Activated CD4-positive, alpha-beta T cell treated with anti-CD3 and anti-CD28 coated beads for 36 hours (primary cell): ENCODE measurements at regions of chr12 and their contacts with region 1.

Region 1: GRCh38 chr12:49740930-49741881 is at the start of gene TMBIM6:
- DNase-seq: peak; percentile 99
- ATAC-seq: peak; percentile 93
- H3K4me3 Mint-ChIP-seq: peak within 1 kb of the TSS; percentile 89
- H3K27ac Mint-ChIP-seq: peak within 1 kb of the TSS; percentile 100
- H3K4me1 Mint-ChIP-seq: peaks cover 45% of the 10 kb centered on the region
- H3K27me3 Mint-ChIP-seq: no peaks in the 10 kb centered on the region
- total RNA-seq, gene TMBIM6: 378 to 450 TPM

Region 2: GRCh38 chr12:49366652-49367380 is 374.4 kb before region 1 on chr12:
- CTCF ChIA-PET with region 1: no interaction called
- POLR2A ChIA-PET with region 1: interaction called, 10 read pairs
- intact Hi-C with region 1: loop called in 1 of 2 experiments (anchors 1 kb)
- DNase-seq: peak; percentile 94
- ATAC-seq: peak; percentile 86
- H3K4me3 Mint-ChIP-seq: peak overlapping the region; percentile 97
- H3K27ac Mint-ChIP-seq: peak overlapping the region; percentile 99
- H3K4me1 Mint-ChIP-seq: peaks cover 25% of the 10 kb centered on the region
- H3K27me3 Mint-ChIP-seq: no peaks in the 10 kb centered on the region

Region 3: DNA sequence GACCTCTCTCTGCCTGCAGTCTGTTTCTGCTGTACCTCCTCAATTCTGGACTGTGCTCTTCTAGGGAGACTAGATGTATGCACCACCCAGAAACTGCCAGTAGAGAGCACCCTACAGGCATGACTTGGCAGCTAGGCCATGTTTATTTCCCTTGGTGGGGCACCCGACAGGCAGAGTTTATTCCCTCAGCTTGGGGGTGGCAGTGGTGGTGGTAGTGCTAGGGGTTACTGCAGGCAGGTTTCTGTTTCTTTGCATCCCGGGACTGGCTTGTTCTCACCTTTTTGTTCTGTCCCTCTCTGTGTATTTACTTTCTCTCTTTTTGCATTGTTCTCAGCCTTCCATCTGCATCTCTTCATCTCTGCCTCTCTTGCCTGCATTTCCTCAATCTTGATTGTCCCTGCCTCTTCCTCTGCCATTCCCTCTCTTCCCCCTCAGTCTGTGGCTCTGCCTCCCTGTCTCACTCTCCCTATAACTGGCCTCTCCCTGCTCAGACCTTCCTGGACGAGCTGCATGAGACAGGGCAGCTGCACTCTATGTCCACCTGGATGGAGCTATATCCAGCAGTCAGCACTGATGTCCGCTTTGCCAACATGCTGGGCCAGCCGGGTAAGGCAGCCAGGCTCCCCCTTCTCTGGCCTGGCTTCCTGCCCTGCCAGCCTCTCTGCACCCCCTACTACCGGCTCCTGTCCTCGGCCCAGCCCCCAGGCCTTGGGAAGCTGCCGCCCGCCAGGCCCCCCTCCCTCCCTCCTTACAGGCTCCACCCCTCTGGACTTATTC is 104.0 kb before region 1 on chr12:
- CTCF ChIA-PET with region 1: interaction called, 12 read pairs
- POLR2A ChIA-PET with region 1: interaction called, 4 read pairs
- intact Hi-C with region 1: no loop called
- DNase-seq: peak; percentile 78
- ATAC-seq: peak; percentile 97
- H3K4me3 Mint-ChIP-seq: no peak overlapping the region
- H3K27ac Mint-ChIP-seq: peak overlapping the region; percentile 33
- H3K4me1 Mint-ChIP-seq: peaks cover 14% of the 10 kb centered on the region
- H3K27me3 Mint-ChIP-seq: no peaks in the 10 kb centered on the region

Region 4: GRCh38 chr12:49763006-49763591 is 21.9 kb after region 1 on chr12:
- CTCF ChIA-PET with region 1: interaction called, 39 read pairs
- POLR2A ChIA-PET with region 1: interaction called, 10 read pairs
- intact Hi-C with region 1: loop called (anchors 1 kb)
- DNase-seq: peak; percentile 89
- ATAC-seq: peak; percentile 59
- H3K4me3 Mint-ChIP-seq: peak overlapping the region; percentile 24
- H3K27ac Mint-ChIP-seq: peak overlapping the region; percentile 77
- H3K4me1 Mint-ChIP-seq: peaks cover 62% of the 10 kb centered on the region
- H3K27me3 Mint-ChIP-seq: no peaks in the 10 kb centered on the region

Region 5: DNA sequence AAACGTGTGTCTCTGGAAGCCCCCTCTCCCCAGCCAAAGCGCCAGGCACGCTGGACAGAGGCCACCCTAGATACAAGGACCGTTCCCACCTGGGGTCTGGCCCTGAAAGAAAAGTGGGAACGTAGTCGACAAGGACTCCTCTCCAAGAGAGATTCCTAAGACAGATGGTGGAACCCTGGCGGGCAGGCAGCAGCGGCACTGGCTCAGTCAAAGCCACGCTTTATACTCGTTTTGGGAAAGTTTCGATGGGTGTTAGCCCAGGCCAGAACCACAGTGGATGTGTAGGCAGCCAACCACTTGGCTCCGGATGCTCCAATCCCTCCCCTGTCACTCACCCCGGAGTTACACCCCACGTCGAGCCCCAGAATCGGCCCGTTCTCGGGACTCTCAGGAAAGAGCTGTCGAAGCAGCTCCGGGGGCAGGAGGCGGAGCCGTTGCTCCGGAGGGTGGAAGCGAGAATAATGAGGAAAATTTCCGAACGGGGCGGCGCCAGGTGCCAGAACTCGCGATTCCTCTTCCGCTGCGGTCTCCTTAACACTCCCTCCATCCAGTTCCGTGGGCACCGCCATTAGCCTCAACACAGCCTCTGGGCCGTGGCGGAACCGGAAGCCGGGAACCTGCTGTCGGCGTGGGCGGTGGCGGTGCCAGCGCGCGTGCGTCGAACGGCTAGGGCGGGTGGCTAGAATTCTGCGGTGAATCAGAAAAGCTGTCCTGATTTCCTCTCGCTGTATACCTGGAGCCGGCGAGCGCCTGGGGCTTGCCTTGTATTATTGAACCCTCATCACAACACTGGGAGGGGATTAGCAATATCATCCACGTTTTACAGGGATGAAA is 101.5 kb after region 1 on chr12 and contains the start of gene BCDIN3D:
- CTCF ChIA-PET with region 1: interaction called, 22 read pairs
- POLR2A ChIA-PET with region 1: interaction called, 11 read pairs
- intact Hi-C with region 1: loop called (anchors 1 kb)
- DNase-seq: peak; percentile 97
- ATAC-seq: peak; percentile 92
- H3K4me3 Mint-ChIP-seq: peak within 1 kb of the TSS; percentile 90
- H3K27ac Mint-ChIP-seq: peak within 1 kb of the TSS; percentile 91
- H3K4me1 Mint-ChIP-seq: peaks cover 30% of the 10 kb centered on the region
- H3K27me3 Mint-ChIP-seq: no peaks in the 10 kb centered on the region
- total RNA-seq, gene BCDIN3D: 5.5 to 5.6 TPM

Region 6: GRCh38 chr12:50387487-50388478 is 646.6 kb after region 1 on chr12:
- CTCF ChIA-PET with region 1: no interaction called
- POLR2A ChIA-PET with region 1: no interaction called
- intact Hi-C with region 1: no loop called
- DNase-seq: no peak
- ATAC-seq: no peak
- H3K4me3 Mint-ChIP-seq: no peak overlapping the region
- H3K27ac Mint-ChIP-seq: no peak overlapping the region
- H3K4me1 Mint-ChIP-seq: no peaks in the 10 kb centered on the region
- H3K27me3 Mint-ChIP-seq: no peaks in the 10 kb centered on the region